Posterior vena cava (tissue), 2 donors: ENCODE measurements at regions of chr17 and their contacts with region 1.

Region 1: DNA sequence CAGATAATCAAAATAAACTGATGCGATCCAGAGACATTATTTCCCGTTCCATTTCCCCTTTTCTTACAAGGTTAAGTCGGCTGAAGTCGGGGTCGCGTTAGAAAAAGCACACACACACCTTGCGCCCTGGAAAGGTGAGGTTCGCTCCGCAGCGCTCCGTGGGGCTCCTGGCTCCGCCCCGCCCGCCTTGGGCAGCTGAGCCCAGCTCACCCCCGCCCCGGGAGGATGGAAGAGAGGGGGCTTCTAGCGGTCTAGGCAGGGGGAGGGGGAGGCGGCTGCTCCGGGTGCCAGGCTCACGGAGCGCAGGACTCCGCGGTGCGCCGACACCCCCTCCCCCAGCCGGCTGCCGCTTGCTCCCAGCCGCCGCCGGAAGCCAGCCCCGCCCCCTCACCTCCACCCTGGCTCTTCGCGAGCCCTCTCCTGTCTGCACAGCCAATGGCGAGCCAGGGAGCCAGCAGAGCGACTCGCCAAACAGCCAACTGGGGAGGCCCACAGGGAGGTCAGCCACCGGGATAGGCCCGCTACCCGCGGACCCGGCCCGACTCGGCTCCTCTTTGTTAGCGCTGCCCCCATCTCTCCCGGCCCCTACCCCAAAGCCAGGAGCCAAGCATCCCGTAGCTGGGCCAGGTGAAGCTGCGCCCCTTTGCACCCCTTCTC is 30.4 kb downstream of the FAM222B start:
- DNase-seq: peak; percentile 99

Region 2: DNA sequence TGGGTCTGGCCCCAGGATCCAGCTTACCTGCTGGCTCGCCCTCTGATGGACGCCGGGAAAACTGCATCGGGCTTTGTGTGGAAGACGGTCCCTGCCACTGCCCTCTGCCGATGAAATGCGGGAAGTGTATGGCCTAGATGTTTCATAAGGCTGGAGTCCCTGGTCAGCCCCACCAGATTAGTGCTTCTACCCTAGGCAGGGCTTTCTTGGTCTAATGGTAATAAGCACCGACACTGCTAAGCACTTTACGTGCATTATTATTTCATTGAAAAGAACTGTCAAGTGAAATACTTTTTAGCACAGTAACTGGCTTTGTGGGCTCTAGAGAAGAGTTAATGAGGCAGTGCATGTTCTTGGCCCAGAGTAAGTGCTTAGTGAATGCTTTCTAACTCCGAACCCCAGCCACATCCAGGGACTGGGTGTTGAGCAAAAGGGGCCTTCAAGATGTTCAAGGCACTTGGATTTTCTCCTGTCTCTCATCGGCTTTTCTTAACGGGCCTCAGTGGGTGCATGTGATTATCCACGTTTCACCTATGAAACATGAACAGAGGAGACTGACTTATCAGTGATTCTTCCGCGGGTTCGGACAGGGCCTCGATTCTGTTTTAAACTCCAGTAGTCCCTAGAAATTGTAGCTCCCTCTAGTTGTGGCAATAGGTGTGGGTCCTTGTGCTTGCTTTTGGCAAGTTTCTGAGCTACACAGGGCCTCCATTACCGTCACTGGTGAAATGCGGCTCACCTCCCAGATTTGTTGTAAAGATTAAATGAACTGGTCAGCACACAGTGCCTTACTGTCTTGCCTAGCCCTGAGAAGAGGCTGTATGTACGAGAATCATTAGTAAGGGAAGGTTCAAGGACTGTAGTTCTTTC is 61.8 kb before region 1 on chr17:
- intact Hi-C with region 1: loop called in 1 of 2 experiments (anchors 10 kb)
- DNase-seq: peak; percentile 97

Region 3: GRCh38 chr17:28763804-28764266 is 48.4 kb before region 1 on chr17:
- intact Hi-C with region 1: loop called (anchors 5 to 10 kb)
- DNase-seq: peak; percentile 78

Region 4: GRCh38 chr17:28773736-28774135 is 38.5 kb before region 1 on chr17:
- intact Hi-C with region 1: loop called in 1 of 2 experiments (anchors 2 kb)
- DNase-seq: no peak